ENCODE measurements at regions of chr14 and their contacts with region 1.

Region 1: DNA sequence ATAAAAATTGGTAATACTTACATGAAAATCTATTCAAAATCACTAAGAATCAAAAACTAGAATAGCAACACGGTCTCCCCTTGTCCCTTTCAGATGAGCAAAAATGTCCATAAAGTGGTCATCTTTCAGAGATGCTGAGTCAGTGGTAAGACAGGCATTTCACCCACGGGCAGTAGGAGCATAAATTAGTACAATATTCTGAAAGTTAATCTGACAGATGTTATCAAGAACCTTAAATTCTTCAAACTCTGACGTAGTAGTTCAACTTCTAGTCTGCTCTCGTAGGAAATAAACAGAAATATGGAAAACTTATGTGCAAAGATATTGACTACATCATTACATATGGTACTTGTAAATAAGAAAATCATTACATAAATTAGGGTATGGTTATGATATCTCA is 33.1 kb upstream of the GNPNAT1 start:
- DNase-seq: no peak
- ATAC-seq: no peak
- H3K4me3 ChIP-seq: no peak overlapping the region
- H3K27ac ChIP-seq: no peak overlapping the region
- H3K4me1 ChIP-seq: no peaks in the 10 kb centered on the region
- H3K27me3 ChIP-seq: no peaks in the 10 kb centered on the region
- CTCF ChIP-seq: no peak

Region 2: DNA sequence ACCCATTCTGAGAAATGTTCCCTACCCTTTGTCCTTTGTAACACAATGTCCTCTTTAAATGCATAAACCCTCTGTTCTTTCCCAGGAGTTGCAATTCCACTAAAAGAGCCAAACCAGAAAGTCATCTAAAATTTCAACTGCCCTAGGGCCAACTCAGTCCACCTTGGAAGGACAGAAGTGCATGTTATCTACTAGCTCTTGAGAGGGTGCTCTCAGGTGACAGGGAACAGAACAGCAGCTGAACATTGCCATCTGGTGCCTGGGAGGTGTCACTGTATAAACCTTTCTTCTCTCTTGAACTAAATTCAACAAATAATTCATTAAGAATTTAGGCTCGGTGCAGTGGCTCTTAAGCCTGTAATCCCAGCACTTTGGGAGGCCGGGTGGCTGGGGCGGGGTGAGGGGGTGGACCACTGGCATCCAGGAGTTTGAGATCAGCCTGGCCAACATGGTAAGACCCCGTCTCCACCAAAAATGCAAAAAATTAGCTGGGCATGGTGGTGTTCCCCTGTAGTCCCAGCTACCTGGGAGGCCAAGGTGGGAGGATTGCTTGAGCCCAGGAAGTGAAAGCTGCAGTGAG is 136.6 kb after region 1 on chr14:
- intact Hi-C with region 1: loop called in 2 of 3 experiments (anchors 5 kb)
- DNase-seq: peak in 4 of 6 donors; percentile 27 to 61 (median 36)
- ATAC-seq: peak; percentile 82 to 98 (median 96)
- H3K4me3 ChIP-seq: no peak overlapping the region
- H3K27ac ChIP-seq: no peak overlapping the region
- H3K4me1 ChIP-seq: no peaks in the 10 kb centered on the region
- H3K27me3 ChIP-seq: no peaks in the 10 kb centered on the region
- CTCF ChIP-seq: peak in 3 of 4 donors; percentile 21 to 39 (median 37)

Region 3: GRCh38 chr14:53062856-53063255 is 238.3 kb after region 1 on chr14:
- intact Hi-C with region 1: loop called in 1 of 3 experiments (anchors 10 kb)
- DNase-seq: no peak
- ATAC-seq: no peak
- H3K4me3 ChIP-seq: no peak overlapping the region
- H3K27ac ChIP-seq: no peak overlapping the region
- H3K4me1 ChIP-seq: no peaks in the 10 kb centered on the region
- H3K27me3 ChIP-seq: no peaks in the 10 kb centered on the region
- CTCF ChIP-seq: no peak